CD4-positive, alpha-beta memory T cell (primary cell): ENCODE measurements at regions of chr16 and their contacts with region 1.

Region 1: GRCh38 chr16:48632137-48632774 is 22.3 kb upstream of the N4BP1 start:
- DNase-seq: no peak
- H3K4me3 ChIP-seq: no peak overlapping the region
- H3K4me3 Mint-ChIP-seq: no peak overlapping the region
- H3K27ac ChIP-seq: no peak overlapping the region
- H3K27ac Mint-ChIP-seq: peak overlapping the region in 1 of 7 donors; percentile 75
- H3K4me1 ChIP-seq: peaks cover 4% of the 10 kb centered on the region
- H3K4me1 Mint-ChIP-seq: peaks cover 4 to 11% (median 5%) of the 10 kb centered on the region in 4 donors
- H3K27me3 ChIP-seq: no peaks in the 10 kb centered on the region
- H3K27me3 Mint-ChIP-seq: peaks cover 3 to 7% of the 10 kb centered on the region in 2 donors

Region 2: DNA sequence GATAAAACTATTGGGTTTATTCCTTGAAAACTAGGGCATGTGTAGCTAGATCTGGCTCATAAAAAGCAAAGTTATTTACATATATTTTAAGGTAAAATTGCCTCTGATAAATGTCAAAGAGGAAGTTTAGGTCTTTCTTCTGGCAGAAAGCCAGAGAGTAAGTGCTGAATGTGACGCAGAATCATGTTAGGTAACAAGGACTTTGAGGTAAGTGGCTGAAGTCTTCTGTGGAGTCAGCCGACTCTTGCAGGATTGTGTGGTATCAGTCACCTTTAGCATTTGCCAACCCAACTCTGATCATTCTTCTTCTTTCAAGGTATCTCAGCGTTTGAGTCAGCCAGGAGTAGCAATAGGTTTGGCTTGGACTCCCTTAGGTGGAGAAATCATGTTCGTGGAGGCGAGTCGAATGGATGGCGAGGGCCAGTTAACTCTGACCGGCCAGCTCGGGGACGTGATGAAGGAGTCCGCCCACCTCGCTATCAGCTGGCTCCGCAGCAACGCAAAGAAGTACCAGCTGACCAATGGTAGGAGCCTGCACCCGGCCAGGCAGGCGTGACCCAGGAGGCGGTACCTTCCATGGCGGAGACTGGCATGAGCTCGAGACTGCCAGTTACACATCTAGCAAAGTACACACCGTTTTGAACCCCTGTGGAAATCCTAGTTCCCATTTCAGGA is 284.9 kb before region 1 on chr16:
- CTCF ChIA-PET with region 1: interaction called, 163 read pairs
- POLR2A ChIA-PET with region 1: no interaction called
- intact Hi-C with region 1: no loop called
- DNase-seq: peak in 2 of 5 donors; percentile 4 to 8
- H3K4me3 ChIP-seq: no peak overlapping the region
- H3K4me3 Mint-ChIP-seq: no peak overlapping the region
- H3K27ac ChIP-seq: no peak overlapping the region
- H3K27ac Mint-ChIP-seq: peak overlapping the region in 2 of 7 donors; percentile 7 to 41
- H3K4me1 ChIP-seq: no peaks in the 10 kb centered on the region
- H3K4me1 Mint-ChIP-seq: peaks cover 0 to 1% (median 0%) of the 10 kb centered on the region in 4 donors
- H3K27me3 ChIP-seq: no peaks in the 10 kb centered on the region
- H3K27me3 Mint-ChIP-seq: no peaks in the 10 kb centered on the region

Region 3: GRCh38 chr16:48365581-48366164 is 266.6 kb before region 1 on chr16:
- CTCF ChIA-PET with region 1: interaction called, 163 read pairs
- POLR2A ChIA-PET with region 1: no interaction called
- intact Hi-C with region 1: no loop called
- DNase-seq: peak; percentile 73 to 78 (median 75)
- H3K4me3 ChIP-seq: peak overlapping the region; percentile 82 to 86
- H3K4me3 Mint-ChIP-seq: peak overlapping the region; percentile 85 to 97 (median 94)
- H3K27ac ChIP-seq: peak overlapping the region; percentile 76
- H3K27ac Mint-ChIP-seq: peak overlapping the region; percentile 88 to 99 (median 98)
- H3K4me1 ChIP-seq: peaks cover 22% of the 10 kb centered on the region
- H3K4me1 Mint-ChIP-seq: peaks cover 23 to 34% (median 31%) of the 10 kb centered on the region in 4 donors
- H3K27me3 ChIP-seq: no peaks in the 10 kb centered on the region
- H3K27me3 Mint-ChIP-seq: no peaks in the 10 kb centered on the region

Region 4: DNA sequence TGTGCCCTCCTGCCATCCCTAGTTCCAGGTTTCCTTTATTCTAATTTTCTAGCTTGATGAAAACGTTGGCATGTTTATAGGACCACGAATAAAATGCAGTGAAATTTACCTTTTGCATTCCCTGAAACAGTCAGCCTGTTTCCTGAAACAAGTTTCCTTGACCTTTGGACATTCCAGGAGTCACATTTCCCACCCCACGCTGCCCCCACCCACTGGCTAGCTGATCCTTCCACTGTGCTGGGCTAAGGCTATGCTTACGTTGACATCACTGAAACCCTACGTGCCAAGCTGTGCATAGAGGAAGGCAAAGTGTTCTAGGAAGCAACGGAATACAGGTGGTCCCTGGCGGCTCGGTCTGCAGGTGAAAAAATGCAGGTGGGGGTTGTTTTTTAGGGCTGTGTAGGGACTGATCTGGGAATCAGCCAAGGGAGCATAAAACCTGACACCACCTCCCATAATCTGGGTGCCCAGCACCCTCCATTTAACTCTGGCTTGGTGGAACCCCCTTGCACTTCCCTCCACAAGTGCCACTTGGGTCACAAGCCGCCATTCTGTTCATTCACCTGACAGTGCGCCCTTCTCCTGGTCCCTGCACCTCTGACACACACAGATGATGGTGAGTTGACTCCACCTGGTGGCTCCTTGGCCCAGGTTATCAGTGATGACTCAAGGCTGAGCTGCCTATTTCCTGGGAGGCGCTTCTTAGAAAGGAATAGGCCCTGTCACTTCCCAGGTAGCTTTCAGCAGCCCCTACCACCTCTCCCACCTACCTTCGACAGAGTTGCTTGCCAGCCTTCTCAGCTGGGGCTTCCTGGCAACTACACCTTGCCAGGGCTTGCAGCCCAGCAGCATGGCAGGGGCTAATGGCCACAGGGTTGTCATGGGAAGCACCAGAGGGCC is 105.9 kb before region 1 on chr16:
- CTCF ChIA-PET with region 1: interaction called, 19 read pairs
- POLR2A ChIA-PET with region 1: no interaction called
- intact Hi-C with region 1: no loop called
- DNase-seq: no peak
- H3K4me3 ChIP-seq: no peak overlapping the region
- H3K4me3 Mint-ChIP-seq: no peak overlapping the region
- H3K27ac ChIP-seq: no peak overlapping the region
- H3K27ac Mint-ChIP-seq: no peak overlapping the region
- H3K4me1 ChIP-seq: no peaks in the 10 kb centered on the region
- H3K4me1 Mint-ChIP-seq: no peaks in the 10 kb centered on the region
- H3K27me3 ChIP-seq: no peaks in the 10 kb centered on the region
- H3K27me3 Mint-ChIP-seq: no peaks in the 10 kb centered on the region